Gastrocnemius medialis (tissue), 4 donors: ENCODE measurements at regions of chr10 and their contacts with region 1.

Region 1: GRCh38 chr10:109883859-109884771 is 39.2 kb downstream of the XPNPEP1 start:
- DNase-seq: peak; percentile 36 to 60
- ATAC-seq: peak; percentile 87
- H3K4me3 ChIP-seq: no peak overlapping the region
- H3K27ac ChIP-seq: peak overlapping the region; percentile 10 to 60 (median 40)
- H3K4me1 ChIP-seq: peaks cover 7 to 14% of the 10 kb centered on the region in 2 donors
- H3K27me3 ChIP-seq: no peaks in the 10 kb centered on the region
- CTCF ChIP-seq: peak; percentile 86 to 93 (median 90)
- POLR2A ChIP-seq: no peak

Region 2: GRCh38 chr10:109912335-109913281 is 28.5 kb after region 1 on chr10:
- in situ Hi-C with region 1: no loop called
- intact Hi-C with region 1: no loop called
- DNase-seq: no peak
- ATAC-seq: peak in 1 of 2 donors; percentile 30
- H3K4me3 ChIP-seq: no peak overlapping the region
- H3K27ac ChIP-seq: no peak overlapping the region
- H3K4me1 ChIP-seq: peaks cover 17 to 26% of the 10 kb centered on the region in 2 donors
- H3K27me3 ChIP-seq: no peaks in the 10 kb centered on the region
- CTCF ChIP-seq: no peak
- POLR2A ChIP-seq: no peak

Region 3: GRCh38 chr10:110007701-110008517 is 123.8 kb after region 1 on chr10 and contains the start of gene ADD3:
- in situ Hi-C with region 1: loop called in 2 of 4 experiments (anchors 10 to 25 kb)
- intact Hi-C with region 1: loop called (anchors 2 kb)
- DNase-seq: peak; percentile 85
- ATAC-seq: peak; percentile 75 to 80
- H3K4me3 ChIP-seq: peak within 1 kb of the TSS; percentile 89 to 98 (median 94)
- H3K27ac ChIP-seq: peak within 1 kb of the TSS; percentile 82 to 89 (median 86)
- H3K4me1 ChIP-seq: peaks cover 11 to 19% of the 10 kb centered on the region in 2 donors
- H3K27me3 ChIP-seq: no peaks in the 10 kb centered on the region
- CTCF ChIP-seq: no peak
- POLR2A ChIP-seq: peak; percentile 26 to 59
- total RNA-seq, gene ADD3: 16.0 to 31.3 (median 18.4) TPM

Region 4: GRCh38 chr10:110110338-110110737 is 226.2 kb after region 1 on chr10:
- in situ Hi-C with region 1: loop called in 1 of 4 experiments (anchors 10 kb)
- intact Hi-C with region 1: no loop called
- DNase-seq: no peak
- ATAC-seq: no peak
- H3K4me3 ChIP-seq: no peak overlapping the region
- H3K27ac ChIP-seq: no peak overlapping the region
- H3K4me1 ChIP-seq: no peaks in the 10 kb centered on the region
- H3K27me3 ChIP-seq: no peaks in the 10 kb centered on the region
- CTCF ChIP-seq: no peak
- POLR2A ChIP-seq: no peak

Region 5: DNA sequence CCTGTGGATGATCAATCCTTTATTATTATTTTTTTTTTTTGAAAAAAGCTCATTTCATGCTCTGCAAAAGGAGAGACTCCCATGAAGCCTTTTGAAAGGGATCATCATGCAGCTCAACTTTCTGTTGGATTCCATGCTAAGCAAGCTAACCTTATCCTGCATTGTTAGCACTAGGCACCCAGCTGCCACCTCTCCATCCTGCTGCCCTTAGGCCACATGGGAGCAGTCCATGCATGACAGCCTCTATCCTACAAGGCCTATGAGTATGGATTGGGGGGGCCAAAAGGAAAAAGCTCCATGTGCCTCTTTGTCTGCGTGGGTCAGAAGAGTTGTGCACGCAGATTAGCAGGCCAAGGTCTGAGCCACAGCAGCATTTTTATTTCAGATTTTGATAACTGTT is 401.4 kb after region 1 on chr10:
- in situ Hi-C with region 1: loop called in 3 of 4 experiments (anchors 10 to 25 kb)
- intact Hi-C with region 1: no loop called
- DNase-seq: no peak
- ATAC-seq: no peak
- H3K4me3 ChIP-seq: no peak overlapping the region
- H3K27ac ChIP-seq: no peak overlapping the region
- H3K4me1 ChIP-seq: no peaks in the 10 kb centered on the region
- H3K27me3 ChIP-seq: no peaks in the 10 kb centered on the region
- CTCF ChIP-seq: no peak
- POLR2A ChIP-seq: no peak

Region 6: GRCh38 chr10:110567201-110568054 is 683.3 kb after region 1 on chr10 and contains the start of gene SMC3:
- in situ Hi-C with region 1: loop called in 1 of 4 experiments (anchors 25 kb)
- intact Hi-C with region 1: no loop called
- DNase-seq: peak; percentile 82 to 87
- ATAC-seq: peak; percentile 95 to 96
- H3K4me3 ChIP-seq: peak within 1 kb of the TSS; percentile 86 to 100 (median 93)
- H3K27ac ChIP-seq: peak within 1 kb of the TSS; percentile 93 to 99 (median 96)
- H3K4me1 ChIP-seq: peaks cover 36% of the 10 kb centered on the region in 2 donors
- H3K27me3 ChIP-seq: peaks cover 0 to 5% (median 2%) of the 10 kb centered on the region in 3 donors
- CTCF ChIP-seq: no peak
- POLR2A ChIP-seq: peak; percentile 63 to 65
- total RNA-seq, gene SMC3: 19.5 to 25.9 (median 21.9) TPM